ENCODE measurements at regions of chr17 and their contacts with region 1.

Region 1: GRCh38 chr17:42388381-42389134 is at the start of gene STAT3:
- DNase-seq: peak; percentile 100
- ATAC-seq: peak; percentile 78
- H3K4me3 ChIP-seq: peak within 1 kb of the TSS; percentile 92
- H3K4me3 Mint-ChIP-seq: peak within 1 kb of the TSS; percentile 97
- H3K27ac ChIP-seq: peak within 1 kb of the TSS; percentile 99 to 100
- H3K27ac Mint-ChIP-seq: peak within 1 kb of the TSS; percentile 99
- H3K4me1 ChIP-seq: peaks cover 26% of the 10 kb centered on the region
- H3K4me1 Mint-ChIP-seq: peaks cover 52% of the 10 kb centered on the region
- H3K27me3 ChIP-seq: no peaks in the 10 kb centered on the region
- H3K27me3 Mint-ChIP-seq: no peaks in the 10 kb centered on the region
- CTCF ChIP-seq: no peak
- total RNA-seq, gene STAT3: 315 to 319 TPM

Region 2: GRCh38 chr17:42112552-42113176 is 275.9 kb before region 1 on chr17 and contains the start of gene DHX58:
- CTCF ChIA-PET with region 1: no interaction called
- POLR2A ChIA-PET with region 1: interaction called, 10 read pairs
- intact Hi-C with region 1: no loop called
- DNase-seq: peak; percentile 65 to 93 (median 73)
- ATAC-seq: peak; percentile 79
- H3K4me3 ChIP-seq: peak within 1 kb of the TSS; percentile 58
- H3K4me3 Mint-ChIP-seq: peak within 1 kb of the TSS; percentile 92
- H3K27ac ChIP-seq: peak within 1 kb of the TSS; percentile 66 to 79
- H3K27ac Mint-ChIP-seq: peak within 1 kb of the TSS; percentile 87
- H3K4me1 ChIP-seq: peaks cover 48% of the 10 kb centered on the region
- H3K4me1 Mint-ChIP-seq: peaks cover 50% of the 10 kb centered on the region
- H3K27me3 ChIP-seq: no peaks in the 10 kb centered on the region
- H3K27me3 Mint-ChIP-seq: no peaks in the 10 kb centered on the region
- CTCF ChIP-seq: no peak
- total RNA-seq, gene DHX58: 33.5 to 35.6 TPM

Region 3: GRCh38 chr17:42287926-42288802 is 100.4 kb before region 1 on chr17 and contains the start of gene STAT5A:
- CTCF ChIA-PET with region 1: no interaction called
- POLR2A ChIA-PET with region 1: interaction called, 35 read pairs
- intact Hi-C with region 1: no loop called
- DNase-seq: peak; percentile 60 to 92 (median 76)
- ATAC-seq: peak; percentile 81
- H3K4me3 ChIP-seq: peak within 1 kb of the TSS; percentile 86
- H3K4me3 Mint-ChIP-seq: peak within 1 kb of the TSS; percentile 92
- H3K27ac ChIP-seq: peak within 1 kb of the TSS; percentile 87 to 89
- H3K27ac Mint-ChIP-seq: peak within 1 kb of the TSS; percentile 95
- H3K4me1 ChIP-seq: peaks cover 61% of the 10 kb centered on the region
- H3K4me1 Mint-ChIP-seq: peaks cover 51% of the 10 kb centered on the region
- H3K27me3 ChIP-seq: no peaks in the 10 kb centered on the region
- H3K27me3 Mint-ChIP-seq: no peaks in the 10 kb centered on the region
- CTCF ChIP-seq: no peak
- total RNA-seq, gene STAT5A: 141 to 150 TPM

Region 4: DNA sequence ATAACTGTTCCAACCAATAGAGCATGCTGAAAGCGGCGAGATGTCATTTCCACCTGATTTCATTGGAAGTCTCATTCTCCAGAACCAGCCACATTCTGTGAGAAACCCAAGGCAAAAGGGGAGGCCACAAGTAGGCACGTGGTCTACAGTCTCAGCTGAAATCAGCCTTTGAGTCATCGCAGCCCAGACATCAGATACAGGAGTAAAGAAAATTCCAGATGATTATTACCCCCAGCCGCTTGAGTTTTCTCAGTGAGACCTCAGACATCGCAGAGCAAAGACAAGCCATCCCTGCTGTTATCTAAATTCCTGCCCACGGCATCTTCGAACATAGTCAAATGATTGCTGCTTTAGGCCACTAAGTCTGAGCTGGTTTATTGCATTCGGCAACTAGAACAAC is 23.4 kb before region 1 on chr17:
- CTCF ChIA-PET with region 1: interaction called, 3 read pairs
- POLR2A ChIA-PET with region 1: interaction called, 14 read pairs
- intact Hi-C with region 1: no loop called
- DNase-seq: no peak
- ATAC-seq: no peak
- H3K4me3 ChIP-seq: no peak overlapping the region
- H3K4me3 Mint-ChIP-seq: no peak overlapping the region
- H3K27ac ChIP-seq: no peak overlapping the region
- H3K27ac Mint-ChIP-seq: no peak overlapping the region
- H3K4me1 ChIP-seq: peaks cover 55% of the 10 kb centered on the region
- H3K4me1 Mint-ChIP-seq: peaks cover 86% of the 10 kb centered on the region
- H3K27me3 ChIP-seq: no peaks in the 10 kb centered on the region
- H3K27me3 Mint-ChIP-seq: no peaks in the 10 kb centered on the region
- CTCF ChIP-seq: no peak

Region 5: GRCh38 chr17:42414704-42415409 is 26.3 kb after region 1 on chr17:
- CTCF ChIA-PET with region 1: no interaction called
- POLR2A ChIA-PET with region 1: interaction called, 22 read pairs
- intact Hi-C with region 1: no loop called
- DNase-seq: peak; percentile 19 to 69 (median 56)
- ATAC-seq: peak; percentile 95
- H3K4me3 ChIP-seq: peak overlapping the region; percentile 34
- H3K4me3 Mint-ChIP-seq: peak overlapping the region; percentile 83
- H3K27ac ChIP-seq: no peak overlapping the region
- H3K27ac Mint-ChIP-seq: peak overlapping the region; percentile 72
- H3K4me1 ChIP-seq: peaks cover 16% of the 10 kb centered on the region
- H3K4me1 Mint-ChIP-seq: peaks cover 16% of the 10 kb centered on the region
- H3K27me3 ChIP-seq: no peaks in the 10 kb centered on the region
- H3K27me3 Mint-ChIP-seq: no peaks in the 10 kb centered on the region
- CTCF ChIP-seq: no peak

Region 6: GRCh38 chr17:42536048-42536371 is 147.5 kb after region 1 on chr17 and contains the start of gene NAGLU:
- CTCF ChIA-PET with region 1: no interaction called
- POLR2A ChIA-PET with region 1: interaction called, 14 read pairs
- intact Hi-C with region 1: no loop called
- DNase-seq: peak; percentile 48 to 86 (median 73)
- ATAC-seq: peak; percentile 68
- H3K4me3 ChIP-seq: peak within 1 kb of the TSS; percentile 64
- H3K4me3 Mint-ChIP-seq: peak within 1 kb of the TSS; percentile 91
- H3K27ac ChIP-seq: peak within 1 kb of the TSS in 1 of 2 donors; percentile 10
- H3K27ac Mint-ChIP-seq: peak within 1 kb of the TSS; percentile 71
- H3K4me1 ChIP-seq: peaks cover 45% of the 10 kb centered on the region
- H3K4me1 Mint-ChIP-seq: peaks cover 48% of the 10 kb centered on the region
- H3K27me3 ChIP-seq: no peaks in the 10 kb centered on the region
- H3K27me3 Mint-ChIP-seq: no peaks in the 10 kb centered on the region
- CTCF ChIP-seq: no peak
- total RNA-seq, gene NAGLU: 7.8 TPM